Activated naive CD4-positive, alpha-beta T cell treated with anti-CD3 and anti-CD28 coated beads, Interleukin-2, amount 10 ng/mL, durations not matched to agents 7 days and 5 days (primary cell): ENCODE measurements at regions of chr15 and their contacts with region 1.

Region 1: GRCh38 chr15:78195735-78196201 is 38.6 kb downstream of the ACSBG1 start:
- DNase-seq: peak; percentile 63
- H3K4me3 Mint-ChIP-seq: no peak overlapping the region
- H3K27ac Mint-ChIP-seq: no peak overlapping the region
- H3K4me1 Mint-ChIP-seq: no peaks in the 10 kb centered on the region
- H3K27me3 Mint-ChIP-seq: peaks cover 36% of the 10 kb centered on the region

Region 2: DNA sequence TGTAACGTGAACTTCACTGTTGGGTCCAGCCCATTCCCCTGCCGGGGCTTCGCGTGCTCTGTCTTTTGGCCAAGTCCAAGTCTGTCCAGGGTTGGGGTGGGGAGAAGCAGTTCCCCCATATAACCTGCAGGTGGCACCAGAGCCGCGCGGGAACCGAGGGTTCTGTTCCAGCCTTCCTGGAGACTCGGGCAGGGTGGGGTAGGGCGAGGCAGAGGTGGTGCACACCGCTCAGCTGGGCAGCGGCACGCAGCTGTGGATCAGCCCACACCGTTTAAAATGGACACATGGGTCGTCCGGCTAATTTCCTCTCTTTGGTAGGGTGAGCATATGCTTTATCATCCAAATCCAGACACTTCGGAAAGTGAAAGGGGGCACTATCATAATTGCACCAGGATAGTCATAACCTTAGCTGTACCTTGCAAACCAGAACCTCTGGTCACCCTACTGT is 236.3 kb before region 1 on chr15:
- CTCF ChIA-PET with region 1: interaction called, 18 read pairs
- DNase-seq: peak; percentile 83
- H3K4me3 Mint-ChIP-seq: no peak overlapping the region
- H3K27ac Mint-ChIP-seq: no peak overlapping the region
- H3K4me1 Mint-ChIP-seq: peaks cover 17% of the 10 kb centered on the region
- H3K27me3 Mint-ChIP-seq: peaks cover 54% of the 10 kb centered on the region

Region 3: DNA sequence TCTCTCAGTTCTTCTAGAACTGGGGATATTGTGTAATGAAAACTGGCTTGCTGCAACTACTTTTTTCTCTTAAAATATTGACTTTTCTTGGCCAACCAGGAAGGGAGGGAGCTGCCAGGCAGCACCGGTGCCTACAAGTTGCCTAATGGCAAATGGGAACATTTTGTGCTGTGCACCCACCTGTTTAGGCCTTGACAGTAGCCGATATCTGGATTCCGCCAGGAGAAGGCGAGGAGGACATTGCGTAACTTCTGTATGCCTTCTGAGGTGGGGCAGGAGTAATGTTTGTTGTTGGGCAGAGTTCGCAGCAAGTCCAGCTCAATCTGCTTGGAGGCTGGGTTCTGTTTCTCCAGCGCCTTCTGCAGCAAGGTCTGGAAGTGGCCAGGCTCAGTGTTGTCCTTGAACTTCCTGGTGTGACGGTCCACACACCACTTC is 183.1 kb before region 1 on chr15:
- CTCF ChIA-PET with region 1: no interaction called
- DNase-seq: no peak
- H3K4me3 Mint-ChIP-seq: no peak overlapping the region
- H3K27ac Mint-ChIP-seq: no peak overlapping the region
- H3K4me1 Mint-ChIP-seq: peaks cover under 1% of the 10 kb centered on the region
- H3K27me3 Mint-ChIP-seq: no peaks in the 10 kb centered on the region

Region 4: GRCh38 chr15:78044407-78045155 is 151.2 kb before region 1 on chr15:
- CTCF ChIA-PET with region 1: no interaction called
- DNase-seq: no peak
- H3K4me3 Mint-ChIP-seq: no peak overlapping the region
- H3K27ac Mint-ChIP-seq: peak overlapping the region; percentile 71
- H3K4me1 Mint-ChIP-seq: peaks cover 92% of the 10 kb centered on the region
- H3K27me3 Mint-ChIP-seq: no peaks in the 10 kb centered on the region

Region 5: GRCh38 chr15:78120523-78120922 is 75.2 kb before region 1 on chr15:
- CTCF ChIA-PET with region 1: interaction called, 57 read pairs
- DNase-seq: no peak
- H3K4me3 Mint-ChIP-seq: no peak overlapping the region
- H3K27ac Mint-ChIP-seq: no peak overlapping the region
- H3K4me1 Mint-ChIP-seq: no peaks in the 10 kb centered on the region
- H3K27me3 Mint-ChIP-seq: peaks cover 11% of the 10 kb centered on the region

Region 6: DNA sequence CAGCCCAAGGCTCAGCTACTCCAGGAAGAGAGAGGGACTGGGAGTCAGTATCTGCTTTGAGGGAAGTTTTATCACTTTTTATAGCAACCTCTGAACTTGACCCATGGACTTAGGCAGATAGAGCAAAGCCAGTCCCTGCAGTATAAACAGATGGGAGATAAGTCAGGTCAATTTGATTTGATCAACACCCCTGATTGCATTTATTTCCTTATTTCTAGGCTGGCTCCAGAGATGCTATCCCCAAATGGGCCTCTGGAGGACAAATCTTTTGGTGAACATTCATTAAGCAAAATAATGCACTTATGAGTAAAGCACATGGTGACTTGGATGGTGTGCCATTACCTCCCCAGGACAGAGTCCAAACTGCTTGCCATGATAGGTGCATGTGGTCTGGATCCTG is 55.5 kb before region 1 on chr15:
- CTCF ChIA-PET with region 1: interaction called, 12 read pairs
- DNase-seq: no peak
- H3K4me3 Mint-ChIP-seq: no peak overlapping the region
- H3K27ac Mint-ChIP-seq: no peak overlapping the region
- H3K4me1 Mint-ChIP-seq: no peaks in the 10 kb centered on the region
- H3K27me3 Mint-ChIP-seq: peaks cover 16% of the 10 kb centered on the region

Region 7: GRCh38 chr15:78170848-78171773 is 24.7 kb before region 1 on chr15:
- CTCF ChIA-PET with region 1: interaction called, 35 read pairs
- DNase-seq: no peak
- H3K4me3 Mint-ChIP-seq: no peak overlapping the region
- H3K27ac Mint-ChIP-seq: no peak overlapping the region
- H3K4me1 Mint-ChIP-seq: peaks cover 64% of the 10 kb centered on the region
- H3K27me3 Mint-ChIP-seq: peaks cover 3% of the 10 kb centered on the region

Region 8: DNA sequence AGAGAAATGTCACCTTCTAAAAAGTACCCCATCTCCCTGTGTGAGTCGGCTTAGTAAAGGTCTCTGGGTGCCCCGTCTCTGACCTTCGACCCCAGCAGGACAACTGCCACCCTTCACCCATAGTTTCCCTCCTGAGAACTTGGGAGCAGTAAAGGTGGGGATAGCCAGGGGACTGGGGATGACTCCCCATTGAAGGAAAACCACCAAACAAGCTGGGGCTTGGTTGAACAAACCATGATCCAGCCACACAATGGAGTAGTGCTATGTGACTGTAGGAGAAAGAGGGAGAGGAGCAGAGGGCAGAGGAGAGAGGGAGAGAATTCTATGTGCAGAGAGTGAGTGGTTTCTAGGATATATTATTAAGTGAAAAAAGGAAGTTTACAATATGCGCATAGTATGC is 12.9 kb before region 1 on chr15:
- CTCF ChIA-PET with region 1: interaction called, 35 read pairs
- DNase-seq: no peak
- H3K4me3 Mint-ChIP-seq: no peak overlapping the region
- H3K27ac Mint-ChIP-seq: no peak overlapping the region
- H3K4me1 Mint-ChIP-seq: no peaks in the 10 kb centered on the region
- H3K27me3 Mint-ChIP-seq: peaks cover 23% of the 10 kb centered on the region